ENCODE measurements at regions of chr6 and their contacts with region 1.

Region 1: DNA sequence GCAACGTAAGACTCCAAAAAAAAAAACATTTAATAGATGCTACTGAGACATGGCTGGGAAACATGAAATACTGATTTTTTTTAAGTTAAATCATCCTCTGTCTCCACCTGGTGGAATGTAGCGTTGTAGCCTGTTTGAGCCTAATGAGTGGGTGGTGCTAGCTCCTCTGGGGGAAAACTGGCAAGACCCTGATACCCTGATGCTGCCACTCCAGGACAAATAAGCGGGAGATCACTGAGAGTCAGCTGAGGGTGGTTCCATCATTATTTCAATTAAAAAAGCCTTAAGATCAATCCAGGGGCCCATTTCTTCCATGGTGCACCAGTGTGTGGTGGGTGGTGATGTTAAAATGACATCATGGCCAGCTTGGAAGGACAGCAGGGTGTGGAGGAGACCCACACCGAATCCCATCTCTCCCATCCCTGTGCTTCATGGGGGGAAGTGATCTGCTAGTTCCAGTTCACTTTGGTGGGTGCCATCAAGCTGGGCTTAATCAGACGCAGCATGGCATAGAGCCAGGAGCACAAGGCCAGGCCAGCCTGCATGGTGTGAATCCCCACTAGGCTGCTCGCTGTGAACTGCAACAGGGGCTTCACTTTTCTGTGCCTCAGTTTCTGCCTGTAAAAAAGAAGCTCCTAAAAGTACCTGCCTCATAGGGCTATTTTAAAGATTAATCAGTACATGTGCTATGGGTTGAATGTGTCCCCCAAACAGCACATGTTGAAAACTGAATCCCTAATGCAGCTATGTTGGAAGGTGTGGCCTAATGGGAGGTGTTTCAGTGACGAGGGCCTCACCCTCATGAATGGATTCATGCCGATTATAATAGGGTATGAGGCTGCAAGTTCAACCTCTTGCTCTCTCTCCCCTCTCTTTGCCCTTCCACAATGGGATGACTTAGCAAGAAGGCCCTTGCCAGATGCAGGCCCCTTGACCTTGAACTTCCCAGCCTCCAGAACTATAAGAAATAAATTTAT is 13.0 kb upstream of the MRPS10 start:
- DNase-seq: peak; percentile 50
- H3K27ac ChIP-seq: peak overlapping the region; percentile 66
- CTCF ChIP-seq: peak; percentile 51

Region 2: DNA sequence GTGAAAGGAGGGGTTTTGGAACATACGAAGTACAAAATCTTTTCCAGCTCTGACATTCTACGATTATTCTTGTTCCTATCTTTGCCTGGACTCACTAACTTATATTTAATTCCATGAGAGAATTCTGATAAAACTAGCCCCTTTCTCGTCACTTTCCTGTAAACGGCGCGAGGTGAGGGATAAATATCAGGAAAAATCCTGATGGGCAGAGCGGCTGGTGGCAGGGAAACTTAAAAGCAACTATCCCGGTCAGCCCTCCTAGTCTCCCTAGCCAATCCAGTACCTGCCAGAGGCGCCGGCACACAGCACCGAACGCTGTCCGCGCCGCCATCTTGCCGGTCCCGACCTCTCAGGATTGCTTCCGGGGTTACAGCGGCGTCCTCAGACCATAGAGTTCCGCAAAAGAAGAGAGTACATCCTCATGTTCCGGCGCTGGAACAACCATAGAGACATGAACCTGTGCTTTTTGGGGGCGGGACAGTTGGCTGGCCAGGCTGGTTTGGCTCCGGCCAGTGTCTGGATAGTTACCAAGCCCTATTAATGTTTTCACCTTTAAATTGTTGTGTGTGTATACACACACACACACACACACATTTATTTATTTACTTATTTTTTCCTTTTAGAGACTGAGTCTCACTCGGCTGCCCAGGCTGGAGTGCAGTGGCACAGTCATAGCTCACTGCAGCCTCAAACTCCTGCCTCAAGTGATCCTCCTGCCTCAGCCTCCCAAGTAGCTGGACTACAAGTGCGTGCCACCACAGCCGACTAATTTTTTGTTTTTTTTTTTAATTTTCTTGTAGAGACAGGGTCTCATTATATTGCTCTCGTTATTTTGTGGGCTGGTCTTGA is 12.9 kb before region 1 on chr6 and contains the start of gene MRPS10:
- CTCF ChIA-PET with region 1: interaction called, 10 read pairs
- POLR2A ChIA-PET with region 1: no interaction called
- DNase-seq: peak; percentile 91
- H3K27ac ChIP-seq: peak within 1 kb of the TSS; percentile 80
- CTCF ChIP-seq: no peak

Region 3: GRCh38 chr6:42378125-42378524 is 147.5 kb after region 1 on chr6:
- CTCF ChIA-PET with region 1: no interaction called
- POLR2A ChIA-PET with region 1: no interaction called
- DNase-seq: no peak
- H3K27ac ChIP-seq: no peak overlapping the region
- CTCF ChIP-seq: no peak

Measured in RWPE1 (cell line).